ENCODE measurements at regions of chr16 and their contacts with region 1.

Region 1: DNA sequence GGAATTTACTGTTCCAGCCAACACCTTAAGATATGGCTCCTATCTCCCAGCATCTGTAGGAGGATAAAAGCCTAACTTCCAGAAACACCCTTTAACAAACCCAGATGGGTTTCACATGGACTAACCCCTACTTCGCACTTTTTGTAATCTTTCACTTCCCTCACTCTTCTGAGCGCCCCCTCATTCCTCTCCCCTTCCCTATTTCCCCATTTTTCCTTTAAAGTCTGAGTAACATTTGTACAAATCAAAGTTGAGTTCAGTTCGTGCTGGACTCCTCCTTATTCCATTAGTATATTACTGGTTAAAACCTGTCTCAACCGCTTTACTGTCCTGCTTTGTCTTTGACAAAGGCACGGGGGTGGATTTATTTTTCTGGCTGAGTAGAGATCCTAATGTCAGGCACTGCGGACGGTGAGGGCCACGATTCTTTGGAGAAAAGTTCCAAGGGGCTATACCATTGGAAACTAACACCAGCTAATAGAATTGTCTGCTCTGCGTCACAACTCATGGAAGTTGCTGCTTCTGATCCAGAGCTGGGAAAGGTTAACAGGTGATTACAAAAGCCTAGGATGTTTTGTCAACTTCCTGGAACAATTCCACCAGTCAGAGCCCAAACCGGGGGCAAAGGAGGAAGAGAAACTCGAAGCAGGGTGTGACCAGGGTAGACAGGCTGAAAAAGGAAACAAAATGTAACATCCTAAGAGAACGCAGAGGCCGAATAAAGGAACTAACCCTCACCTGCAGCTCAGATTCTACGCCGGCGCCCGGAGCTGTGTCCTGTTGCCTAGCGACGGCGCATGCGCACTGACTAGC is 12.5 kb downstream of the TAT start:
- DNase-seq: no peak
- H3K4me3 Mint-ChIP-seq: peak overlapping the region; percentile 80
- H3K27ac Mint-ChIP-seq: peak overlapping the region; percentile 88
- H3K4me1 Mint-ChIP-seq: peaks cover 15% of the 10 kb centered on the region
- H3K27me3 Mint-ChIP-seq: no peaks in the 10 kb centered on the region

Region 2: DNA sequence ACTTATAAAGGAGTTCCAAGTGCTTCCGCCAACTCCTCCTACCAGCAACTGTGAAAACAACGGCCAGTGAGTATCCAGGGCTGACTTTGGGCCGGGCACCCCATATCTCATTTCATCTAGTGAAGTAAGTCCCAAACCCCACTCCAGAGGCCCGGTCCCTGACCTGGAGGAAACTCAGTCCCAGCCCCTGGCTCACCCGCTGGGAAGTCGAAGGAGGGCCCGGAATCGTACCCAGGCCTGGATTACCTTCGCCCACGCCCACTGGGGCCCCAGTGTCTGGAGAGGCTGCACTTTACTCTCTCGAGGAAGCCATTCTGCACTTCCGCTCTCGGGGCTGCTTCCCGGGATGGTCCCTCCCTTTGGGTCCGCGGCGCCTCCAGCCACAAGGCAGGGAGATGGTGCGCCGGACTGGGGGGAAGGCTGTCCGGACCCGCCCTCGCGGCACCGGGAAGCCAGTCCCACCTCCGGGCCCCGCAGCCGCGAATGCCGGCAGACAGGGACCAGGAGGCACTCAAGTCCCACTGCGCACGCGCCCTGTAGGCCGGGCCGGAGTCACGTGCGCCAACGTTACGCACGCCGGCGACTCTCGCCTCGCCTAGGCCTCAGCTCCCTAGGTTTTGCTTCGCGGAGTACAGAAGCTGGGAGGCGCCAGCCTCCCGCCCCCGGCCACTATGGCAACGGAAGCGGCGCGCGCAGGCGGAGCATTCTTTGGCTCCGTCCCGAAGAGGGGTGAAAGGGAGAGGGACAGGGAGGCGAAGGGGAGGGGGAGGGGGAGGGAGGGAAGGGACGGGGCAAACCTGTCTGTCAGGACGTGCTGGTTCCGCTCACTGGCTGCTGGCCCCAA is 275.2 kb before region 1 on chr16 and contains the start of gene CMTR2:
- CTCF ChIA-PET with region 1: no interaction called
- intact Hi-C with region 1: loop called (anchors 2 kb)
- DNase-seq: peak; percentile 93
- H3K4me3 Mint-ChIP-seq: peak within 1 kb of the TSS; percentile 84
- H3K27ac Mint-ChIP-seq: peak within 1 kb of the TSS; percentile 86
- H3K4me1 Mint-ChIP-seq: peaks cover 9% of the 10 kb centered on the region
- H3K27me3 Mint-ChIP-seq: peaks cover 7% of the 10 kb centered on the region
- total RNA-seq, gene CMTR2: 14.4 to 15.1 TPM

Region 3: GRCh38 chr16:71328151-71328550 is 236.2 kb before region 1 on chr16:
- CTCF ChIA-PET with region 1: no interaction called
- intact Hi-C with region 1: no loop called
- DNase-seq: no peak
- H3K4me3 Mint-ChIP-seq: no peak overlapping the region
- H3K27ac Mint-ChIP-seq: no peak overlapping the region
- H3K4me1 Mint-ChIP-seq: no peaks in the 10 kb centered on the region
- H3K27me3 Mint-ChIP-seq: peaks cover 9% of the 10 kb centered on the region

Region 4: GRCh38 chr16:71723537-71724319 is 159.4 kb after region 1 on chr16:
- CTCF ChIA-PET with region 1: no interaction called
- intact Hi-C with region 1: loop called (anchors 1 kb)
- DNase-seq: peak; percentile 74
- H3K4me3 Mint-ChIP-seq: peak overlapping the region; percentile 80
- H3K27ac Mint-ChIP-seq: no peak overlapping the region
- H3K4me1 Mint-ChIP-seq: peaks cover 18% of the 10 kb centered on the region
- H3K27me3 Mint-ChIP-seq: peaks cover 6% of the 10 kb centered on the region

Region 5: DNA sequence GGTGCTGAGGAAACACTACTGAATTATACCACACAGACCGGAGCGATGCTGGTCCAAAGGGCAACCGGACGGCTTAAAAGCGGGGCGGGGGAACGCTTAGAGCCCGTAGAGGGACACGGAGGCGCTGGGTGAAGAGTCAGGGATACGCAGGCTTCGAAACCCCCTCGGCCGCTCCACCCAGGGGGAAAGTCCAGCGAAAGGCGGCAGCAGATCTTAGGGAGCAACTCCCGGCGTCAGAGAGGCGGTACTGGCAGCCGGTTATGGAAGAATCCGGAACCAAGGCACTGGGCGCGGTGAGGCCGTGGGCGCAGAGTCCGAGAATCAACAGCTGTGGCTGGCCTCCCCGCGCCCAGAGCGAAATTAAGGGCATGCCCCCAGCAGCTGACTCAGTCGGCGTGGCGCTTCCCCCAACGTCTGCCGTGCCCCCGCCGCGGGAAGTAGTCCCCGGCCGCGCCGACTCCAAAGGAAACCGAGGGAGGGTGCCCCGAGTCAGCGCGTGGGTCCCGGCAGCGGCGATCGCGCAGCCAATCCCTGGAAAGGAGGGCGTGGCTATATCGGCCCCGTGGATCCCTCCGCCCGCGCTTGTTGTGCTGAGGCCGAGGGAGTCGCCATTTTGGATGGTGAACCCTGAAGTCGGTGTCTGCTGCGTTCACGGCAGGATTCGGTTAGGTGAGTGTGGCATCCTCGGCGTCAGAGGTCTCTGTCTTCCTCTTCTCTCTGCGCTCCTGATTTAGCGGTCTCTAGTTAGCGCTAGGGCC is 330.7 kb after region 1 on chr16 and contains the start of gene IST1:
- CTCF ChIA-PET with region 1: no interaction called
- intact Hi-C with region 1: loop called (anchors 1 kb)
- DNase-seq: peak; percentile 99
- H3K4me3 Mint-ChIP-seq: peak within 1 kb of the TSS; percentile 97
- H3K27ac Mint-ChIP-seq: peak within 1 kb of the TSS; percentile 96
- H3K4me1 Mint-ChIP-seq: peaks cover 33% of the 10 kb centered on the region
- H3K27me3 Mint-ChIP-seq: no peaks in the 10 kb centered on the region
- total RNA-seq, gene IST1: 196 to 203 TPM

Region 6: DNA sequence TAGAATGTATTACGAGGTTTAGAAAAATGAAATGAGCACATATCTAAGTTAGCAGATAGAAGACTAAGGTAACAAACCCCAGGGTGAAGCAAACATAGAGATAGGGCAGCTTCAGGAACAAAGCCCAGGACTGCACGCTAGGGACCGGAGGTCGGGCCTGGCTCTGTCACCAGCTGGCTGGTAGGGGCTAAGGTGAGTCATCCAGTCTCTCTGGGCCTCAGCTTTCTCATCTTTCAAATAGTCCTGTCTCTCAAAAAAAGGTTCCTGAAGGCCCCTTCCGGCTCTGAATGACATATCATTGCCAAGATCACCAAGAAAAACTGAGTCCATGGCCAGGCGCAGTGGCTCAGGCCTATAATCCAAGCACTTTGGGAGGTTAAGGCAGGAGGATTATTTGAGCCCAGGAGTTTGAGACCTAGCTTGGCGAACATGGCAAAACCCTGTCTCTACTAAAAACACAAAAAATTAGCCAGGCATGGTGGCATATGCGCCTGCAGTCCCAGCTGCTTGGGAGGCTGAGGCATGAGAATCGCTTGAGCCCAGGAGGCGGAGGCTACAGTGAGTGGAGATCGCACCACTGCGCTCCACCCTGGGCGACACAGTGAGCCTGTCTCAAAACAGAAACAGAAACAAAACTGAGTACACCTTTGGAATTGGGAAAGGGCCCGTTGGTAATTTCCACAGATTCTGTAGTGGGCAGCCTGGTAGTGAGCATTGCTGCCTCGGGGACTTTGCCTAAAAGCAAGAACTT is 409.9 kb after region 1 on chr16:
- CTCF ChIA-PET with region 1: no interaction called
- intact Hi-C with region 1: no loop called
- DNase-seq: no peak
- H3K4me3 Mint-ChIP-seq: no peak overlapping the region
- H3K27ac Mint-ChIP-seq: no peak overlapping the region
- H3K4me1 Mint-ChIP-seq: no peaks in the 10 kb centered on the region
- H3K27me3 Mint-ChIP-seq: no peaks in the 10 kb centered on the region

Region 7: GRCh38 chr16:72008424-72009216 is 444.3 kb after region 1 on chr16 and contains the start of gene DHODH:
- CTCF ChIA-PET with region 1: no interaction called
- intact Hi-C with region 1: loop called (anchors 1 kb)
- DNase-seq: peak; percentile 99
- H3K4me3 Mint-ChIP-seq: peak within 1 kb of the TSS; percentile 94
- H3K27ac Mint-ChIP-seq: peak within 1 kb of the TSS; percentile 76
- H3K4me1 Mint-ChIP-seq: peaks cover 21% of the 10 kb centered on the region
- H3K27me3 Mint-ChIP-seq: no peaks in the 10 kb centered on the region
- total RNA-seq, gene DHODH: 18.3 to 19.9 TPM

Measured in activated naive CD4-positive, alpha-beta T cell treated with anti-CD3 and anti-CD28 coated beads for 36 hours (primary cell).